ENCODE measurements at regions of chr12 and their contacts with region 1.

Region 1: DNA sequence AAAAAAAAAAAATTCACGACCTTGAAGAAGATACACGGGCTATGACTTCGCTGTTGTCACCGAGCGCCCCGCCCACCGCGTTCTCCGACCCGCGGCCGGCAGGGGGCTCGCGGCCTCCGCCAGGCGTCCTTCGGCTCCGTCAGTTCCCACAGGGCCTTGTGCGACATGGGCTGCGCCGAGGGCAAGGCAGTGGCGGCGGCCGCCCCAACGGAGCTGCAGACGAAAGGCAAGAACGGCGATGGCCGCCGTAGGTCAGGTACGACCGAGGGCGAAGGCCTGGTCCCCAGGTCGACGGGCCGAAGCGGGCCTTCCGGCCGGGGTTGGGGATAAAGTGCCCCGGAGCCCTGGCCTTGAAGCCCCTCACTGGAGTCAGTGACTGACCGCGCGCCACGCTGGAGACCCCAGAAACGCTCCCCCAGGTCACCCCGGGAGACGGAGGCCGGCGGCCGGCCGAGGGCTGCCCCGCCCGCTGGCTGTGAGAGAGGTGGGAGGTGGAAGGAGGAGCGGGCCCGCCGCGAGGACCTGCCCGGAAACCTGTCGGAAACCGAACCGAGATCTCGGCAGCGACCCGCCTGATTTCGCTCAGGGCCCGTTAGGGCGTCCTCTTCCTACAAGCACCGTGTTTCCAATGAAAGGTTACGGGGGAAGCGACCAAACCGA is at the start of gene TXNRD1:
- DNase-seq: peak; percentile 82 to 87
- ATAC-seq: peak; percentile 91 to 97 (median 94)
- H3K4me3 ChIP-seq: peak within 1 kb of the TSS; percentile 57 to 85 (median 75)
- H3K27ac ChIP-seq: peak within 1 kb of the TSS; percentile 84 to 93 (median 88)
- H3K4me1 ChIP-seq: peaks cover 0 to 33% (median 14%) of the 10 kb centered on the region in 9 donors
- H3K27me3 ChIP-seq: peaks cover 0 to 5% (median 0%) of the 10 kb centered on the region in 7 donors
- CTCF ChIP-seq: peak; percentile 85 to 97 (median 90)
- total RNA-seq, gene TXNRD1: 57.7 to 113 (median 86.9) TPM

Region 2: DNA sequence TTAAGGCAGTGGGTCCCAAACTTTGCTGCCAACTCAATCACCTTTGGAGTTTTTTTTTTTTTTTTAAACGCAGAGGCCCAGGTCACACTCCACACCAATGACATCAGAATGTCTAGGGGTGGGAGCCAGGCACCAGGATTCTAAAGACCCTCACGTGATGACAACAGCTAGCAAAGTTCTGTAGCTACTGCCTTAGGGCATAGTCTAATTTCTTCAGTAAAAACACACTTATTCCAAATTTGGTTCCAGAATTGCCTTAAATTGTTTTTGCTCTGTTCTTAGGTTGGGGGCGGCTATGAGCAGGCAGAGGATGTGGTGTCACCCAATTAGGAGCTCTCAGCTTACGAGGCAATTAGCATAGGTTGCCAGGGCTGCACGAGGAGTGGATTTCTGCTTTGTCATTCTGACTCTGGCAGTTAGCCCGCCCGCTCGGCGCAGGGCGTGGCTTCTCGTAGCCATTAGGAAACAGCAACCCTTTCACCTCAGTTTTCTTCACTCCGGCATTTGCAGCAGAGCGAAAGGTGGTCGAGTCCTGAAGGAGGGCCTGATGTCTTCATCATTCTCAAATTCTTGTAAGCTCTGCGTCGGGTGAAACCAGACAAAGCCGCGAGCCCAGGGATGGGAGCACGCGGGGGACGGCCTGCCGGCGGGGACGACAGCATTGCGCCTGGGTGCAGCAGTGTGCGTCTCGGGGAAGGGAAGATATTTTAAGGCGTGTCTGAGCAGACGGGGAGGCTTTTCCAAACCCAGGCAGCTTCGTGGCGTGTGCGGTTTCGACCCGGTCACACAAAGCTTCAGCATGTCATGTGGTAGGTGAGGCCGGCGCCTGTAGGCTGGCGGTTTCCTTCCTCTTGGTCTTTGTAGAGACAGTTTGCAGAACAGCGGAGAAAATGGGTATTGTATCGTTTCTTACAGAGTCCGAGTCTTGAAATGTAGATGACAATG is 71.0 kb after region 1 on chr12:
- intact Hi-C with region 1: loop called in 9 of 10 experiments (anchors 1 to 10 kb)
- DNase-seq: peak; percentile 90 to 94
- ATAC-seq: peak; percentile 92 to 96 (median 94)
- H3K4me3 ChIP-seq: peak overlapping the region; percentile 50 to 83 (median 72)
- H3K27ac ChIP-seq: peak overlapping the region; percentile 80 to 97 (median 92)
- H3K4me1 ChIP-seq: peaks cover 8 to 40% (median 33%) of the 10 kb centered on the region in 9 donors
- H3K27me3 ChIP-seq: no peaks in the 10 kb centered on the region
- CTCF ChIP-seq: peak in 2 of 9 donors; percentile 7 to 11

Region 3: GRCh38 chr12:104294845-104295688 is 79.3 kb after region 1 on chr12:
- intact Hi-C with region 1: loop called in 2 of 10 experiments (anchors 5 kb)
- DNase-seq: no peak
- ATAC-seq: peak in 1 of 8 donors; percentile 28
- H3K4me3 ChIP-seq: no peak overlapping the region
- H3K27ac ChIP-seq: peak overlapping the region in 1 of 10 donors; percentile 3
- H3K4me1 ChIP-seq: peaks cover 0 to 62% (median 43%) of the 10 kb centered on the region in 9 donors
- H3K27me3 ChIP-seq: no peaks in the 10 kb centered on the region
- CTCF ChIP-seq: no peak

Region 4: DNA sequence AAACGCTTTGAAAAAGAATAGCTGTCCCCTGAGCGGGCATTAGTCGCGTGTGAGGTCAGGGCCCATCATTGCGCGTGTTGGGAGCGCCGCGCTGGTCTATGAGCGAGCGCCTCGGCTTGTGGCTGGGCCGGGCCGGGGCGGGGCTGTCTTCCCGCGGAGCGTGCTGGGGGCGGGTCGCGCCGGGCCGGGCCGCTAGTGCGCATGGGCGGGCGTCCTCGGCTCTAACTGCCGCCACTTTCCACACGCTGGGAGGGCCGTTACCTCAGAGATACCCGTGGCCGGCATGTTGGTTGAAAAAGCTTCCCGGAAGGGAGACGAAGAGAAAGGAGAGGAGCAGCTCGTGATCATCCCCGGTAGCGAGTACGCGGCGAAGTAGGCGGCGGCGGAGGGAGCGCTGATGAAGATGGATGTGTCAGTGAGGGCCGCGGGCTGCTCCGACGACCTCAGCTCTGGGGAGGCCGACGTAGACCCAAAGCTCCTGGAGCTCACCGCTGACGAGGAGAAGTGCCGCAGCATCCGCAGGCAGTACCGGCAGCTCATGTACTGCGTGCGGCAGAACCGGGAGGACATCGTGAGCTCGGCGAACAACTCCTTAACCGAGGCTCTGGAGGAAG is 87.9 kb after region 1 on chr12 and contains the start of gene EID3:
- intact Hi-C with region 1: loop called in 3 of 10 experiments (anchors 1 to 5 kb)
- DNase-seq: peak; percentile 90 to 93
- ATAC-seq: peak; percentile 99 to 100 (median 100)
- H3K4me3 ChIP-seq: peak within 1 kb of the TSS; percentile 31 to 66 (median 56)
- H3K27ac ChIP-seq: peak within 1 kb of the TSS in 9 of 10 donors; percentile 42 to 80 (median 65)
- H3K4me1 ChIP-seq: peaks cover 0 to 72% (median 59%) of the 10 kb centered on the region in 9 donors
- H3K27me3 ChIP-seq: no peaks in the 10 kb centered on the region
- CTCF ChIP-seq: peak in 1 of 9 donors; percentile 6
- total RNA-seq, gene EID3: 0.52 to 1.6 (median 1.0) TPM

Region 5: DNA sequence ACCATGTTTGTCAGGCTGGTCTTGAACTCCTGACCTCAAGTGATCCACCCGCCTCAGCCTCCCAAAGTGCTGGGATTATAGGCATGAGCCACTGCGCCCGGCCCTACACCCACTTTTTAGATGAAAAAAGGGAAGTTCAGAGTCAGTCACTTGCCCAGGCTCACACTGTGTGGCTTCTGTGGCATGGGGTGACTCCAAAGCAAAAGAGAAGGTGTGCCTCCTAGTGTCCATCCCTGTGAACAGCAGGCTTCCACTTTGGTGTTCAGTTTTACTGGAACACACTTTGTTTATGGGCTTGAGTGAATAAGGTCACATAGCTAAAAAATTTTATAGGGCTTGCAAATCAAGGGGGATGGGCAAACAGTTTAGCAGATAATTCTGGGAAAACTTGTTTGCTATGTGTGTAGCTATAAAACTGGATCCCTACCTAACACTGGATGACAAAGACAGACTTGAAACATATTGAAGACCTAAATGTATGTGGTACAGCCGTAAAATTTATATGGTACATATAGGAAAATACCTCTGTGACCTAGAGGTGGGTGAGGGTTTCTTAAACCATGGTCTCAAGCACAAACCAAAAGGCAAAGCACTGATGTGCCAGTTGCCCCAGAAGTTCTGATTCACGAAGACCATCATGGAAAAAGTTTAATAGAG is 142.7 kb after region 1 on chr12:
- intact Hi-C with region 1: loop called in 9 of 10 experiments (anchors 2 to 5 kb)
- DNase-seq: peak; percentile 35 to 51
- ATAC-seq: peak; percentile 70 to 80 (median 78)
- H3K4me3 ChIP-seq: no peak overlapping the region
- H3K27ac ChIP-seq: no peak overlapping the region
- H3K4me1 ChIP-seq: peaks cover 0 to 10% (median 0%) of the 10 kb centered on the region in 9 donors
- H3K27me3 ChIP-seq: no peaks in the 10 kb centered on the region
- CTCF ChIP-seq: peak; percentile 61 to 89 (median 87)

Measured in heart right ventricle (tissue), 16 donors.